ENCODE measurements at regions of chr6 and their contacts with region 1.

Region 1: DNA sequence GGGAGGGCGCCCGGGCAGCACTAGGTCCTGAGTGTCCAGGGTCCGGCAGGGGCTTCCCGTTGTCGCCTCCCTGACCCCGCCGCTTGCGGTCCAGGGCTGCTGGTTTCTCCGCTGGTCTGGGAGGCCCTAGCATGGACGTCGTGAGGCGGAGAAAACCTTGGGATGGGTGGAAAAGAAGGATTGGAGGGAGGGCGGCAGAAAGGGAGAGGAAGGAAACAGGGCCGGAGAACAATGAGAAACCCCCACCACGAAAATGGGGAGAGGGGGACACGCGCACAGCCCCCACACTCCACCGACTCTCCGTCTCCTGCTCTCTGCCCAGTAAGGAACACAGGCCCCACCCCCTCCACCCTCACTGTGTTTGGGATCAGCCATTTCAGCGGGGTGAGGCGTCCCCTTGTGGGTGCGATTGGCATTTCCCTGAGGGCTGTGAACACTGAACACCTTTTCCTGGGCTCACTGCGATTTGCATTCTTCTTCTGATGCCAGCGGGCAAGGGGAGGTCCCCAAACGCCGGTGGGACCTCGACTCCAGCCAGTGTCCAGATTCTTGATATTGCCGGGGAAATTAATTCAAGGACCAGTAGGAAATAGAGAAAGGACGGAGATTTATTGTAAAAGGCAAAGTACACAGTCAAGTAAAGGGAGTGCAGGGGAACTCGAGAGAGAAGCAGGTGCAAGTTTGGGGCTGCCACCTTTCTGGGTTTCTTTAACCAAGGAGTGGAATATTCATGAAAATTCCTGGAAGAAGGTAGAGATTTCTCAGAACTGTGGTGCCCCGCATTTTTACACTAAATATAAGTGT is 3.3 kb upstream of the RAET1G start:
- DNase-seq: peak; percentile 80
- H3K4me3 ChIP-seq: peak overlapping the region; percentile 19 to 47 (median 45)
- H3K27ac ChIP-seq: no peak overlapping the region
- H3K4me1 ChIP-seq: peaks cover 4% of the 10 kb centered on the region
- H3K27me3 ChIP-seq: peaks cover 20 to 21% of the 10 kb centered on the region in 2 experiments
- CTCF ChIP-seq: peak; percentile 72 to 91
- POLR2A ChIP-seq: no peak

Region 2: GRCh38 chr6:149565527-149566409 is 360.4 kb before region 1 on chr6 and contains the start of gene GINM1:
- CTCF ChIA-PET with region 1: no interaction called
- POLR2A ChIA-PET with region 1: no interaction called
- dilution Hi-C with region 1: no loop called
- intact Hi-C with region 1: loop called (anchors 5 kb)
- DNase-seq: peak; percentile 97
- H3K4me3 ChIP-seq: peak within 1 kb of the TSS; percentile 75 to 93 (median 85)
- H3K27ac ChIP-seq: peak within 1 kb of the TSS; percentile 82
- H3K4me1 ChIP-seq: peaks cover 16% of the 10 kb centered on the region
- H3K27me3 ChIP-seq: no peaks in the 10 kb centered on the region
- CTCF ChIP-seq: peak; percentile 52 to 71
- POLR2A ChIP-seq: no peak
- total RNA-seq, gene GINM1: 38.0 and 38.2 TPM in 2 replicates

Region 3: GRCh38 chr6:149723771-149724417 is 202.3 kb before region 1 on chr6:
- CTCF ChIA-PET with region 1: no interaction called
- POLR2A ChIA-PET with region 1: no interaction called
- dilution Hi-C with region 1: no loop called
- intact Hi-C with region 1: loop called (anchors 1 kb)
- DNase-seq: peak; percentile 76
- H3K4me3 ChIP-seq: no peak overlapping the region
- H3K27ac ChIP-seq: no peak overlapping the region
- H3K4me1 ChIP-seq: peaks cover under 1% of the 10 kb centered on the region
- H3K27me3 ChIP-seq: no peaks in the 10 kb centered on the region
- CTCF ChIP-seq: peak; percentile 77
- POLR2A ChIP-seq: no peak

Region 4: DNA sequence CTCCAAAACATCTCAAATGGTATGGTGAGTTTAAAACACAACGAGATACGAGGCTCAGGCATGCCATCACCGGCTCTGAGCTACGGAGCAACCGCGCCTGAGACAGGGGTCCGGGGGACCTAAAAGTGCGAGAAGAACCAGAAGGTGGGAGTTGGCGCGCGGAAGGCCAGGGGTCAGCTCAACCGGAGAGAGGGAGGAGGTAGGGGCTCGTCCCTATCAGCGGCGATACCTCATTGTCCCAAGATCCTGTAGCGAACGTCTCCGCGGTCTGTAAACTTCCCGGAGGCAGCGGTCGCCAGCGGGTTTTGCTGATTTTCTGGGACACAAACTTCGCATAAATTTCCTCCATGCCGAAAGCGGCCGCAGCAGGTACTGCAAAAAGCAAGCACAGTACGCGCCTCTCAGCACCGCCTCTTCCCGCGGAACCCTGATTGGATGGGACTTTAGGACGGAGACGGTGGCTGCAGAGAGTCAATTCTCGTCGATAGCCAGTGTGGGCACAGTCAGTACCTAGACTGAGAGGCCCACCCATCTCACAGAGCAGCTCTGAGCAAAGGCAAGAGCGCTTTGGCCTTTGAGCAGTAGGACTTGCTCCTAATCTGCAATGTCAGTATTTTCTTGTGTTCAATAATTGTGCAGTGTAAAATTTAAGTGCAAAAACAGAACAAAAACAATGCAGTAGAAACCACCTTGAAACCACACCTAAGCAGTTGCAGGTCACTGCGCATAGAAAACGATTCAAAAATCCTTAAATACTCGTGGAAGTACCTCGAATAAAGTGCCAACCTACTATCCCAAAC is 179.8 kb before region 1 on chr6 and contains the start of gene NUP43:
- CTCF ChIA-PET with region 1: interaction called, 3 read pairs
- POLR2A ChIA-PET with region 1: no interaction called
- dilution Hi-C with region 1: no loop called
- intact Hi-C with region 1: loop called (anchors 1 kb)
- DNase-seq: peak; percentile 92
- H3K4me3 ChIP-seq: peak within 1 kb of the TSS; percentile 83 to 97 (median 96)
- H3K27ac ChIP-seq: peak within 1 kb of the TSS; percentile 47
- H3K4me1 ChIP-seq: peaks cover 12% of the 10 kb centered on the region
- H3K27me3 ChIP-seq: no peaks in the 10 kb centered on the region
- CTCF ChIP-seq: peak; percentile 34 to 53
- POLR2A ChIP-seq: peak; percentile 82
- total RNA-seq, gene NUP43: 49.0 and 56.8 TPM in 2 replicates

Region 5: DNA sequence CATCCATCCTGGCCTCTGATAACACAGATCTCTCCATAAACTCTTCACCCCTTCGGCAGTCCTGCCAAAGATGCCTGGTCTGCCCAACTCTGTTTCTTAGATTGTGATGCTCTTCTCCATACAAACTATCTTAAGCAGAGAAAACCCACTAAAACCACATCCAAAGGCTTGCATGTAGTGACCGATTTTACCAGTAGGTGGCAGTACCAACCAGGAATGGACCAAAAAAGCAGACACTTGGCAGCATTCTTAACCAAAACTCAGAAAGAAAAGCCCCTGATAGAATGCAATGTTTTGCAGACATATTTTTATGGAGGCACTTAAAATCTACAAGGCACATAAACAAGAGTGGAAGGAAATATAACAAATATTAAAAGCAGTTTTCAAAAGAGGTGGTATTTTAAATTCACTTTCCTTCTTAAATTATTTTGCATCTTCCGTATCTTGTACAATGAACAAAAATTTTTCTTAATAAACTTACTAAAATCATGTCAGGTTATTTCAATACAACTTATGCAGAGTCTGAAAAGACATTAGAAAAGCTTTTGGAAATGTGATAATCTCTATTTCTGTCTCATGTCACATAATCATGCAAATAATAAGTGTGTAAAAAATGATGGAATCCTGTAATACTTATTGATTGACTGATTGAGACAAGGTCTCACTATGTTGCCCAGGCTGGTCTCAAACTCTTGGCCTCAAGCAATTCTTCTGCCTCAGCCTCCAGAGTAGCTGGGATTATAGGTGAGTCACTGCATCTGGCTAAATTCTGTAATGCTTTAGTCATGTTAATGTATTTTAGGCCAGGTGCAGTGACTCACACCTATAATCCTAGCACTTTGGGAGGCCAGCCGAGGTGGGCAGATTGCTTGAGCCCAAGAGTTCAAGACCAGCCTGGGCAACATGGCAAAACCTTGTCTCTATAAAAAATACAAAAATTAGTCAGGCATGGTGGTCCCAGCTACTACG is 91.4 kb before region 1 on chr6:
- CTCF ChIA-PET with region 1: interaction called, 30 read pairs
- POLR2A ChIA-PET with region 1: no interaction called
- dilution Hi-C with region 1: no loop called
- intact Hi-C with region 1: loop called (anchors 1 kb)
- DNase-seq: peak; percentile 80
- H3K4me3 ChIP-seq: no peak overlapping the region
- H3K27ac ChIP-seq: no peak overlapping the region
- H3K4me1 ChIP-seq: no peaks in the 10 kb centered on the region
- H3K27me3 ChIP-seq: no peaks in the 10 kb centered on the region
- CTCF ChIP-seq: peak; percentile 77
- POLR2A ChIP-seq: no peak

Region 6: GRCh38 chr6:149840345-149841075 is 85.7 kb before region 1 on chr6:
- CTCF ChIA-PET with region 1: interaction called, 30 read pairs
- POLR2A ChIA-PET with region 1: no interaction called
- dilution Hi-C with region 1: no loop called
- intact Hi-C with region 1: loop called (anchors 1 kb)
- DNase-seq: peak; percentile 66
- H3K4me3 ChIP-seq: no peak overlapping the region
- H3K27ac ChIP-seq: no peak overlapping the region
- H3K4me1 ChIP-seq: peaks cover 3% of the 10 kb centered on the region
- H3K27me3 ChIP-seq: no peaks in the 10 kb centered on the region
- CTCF ChIP-seq: peak; percentile 64 to 65
- POLR2A ChIP-seq: no peak

Region 7: GRCh38 chr6:150195996-150196417 is 269.8 kb after region 1 on chr6:
- CTCF ChIA-PET with region 1: no interaction called
- POLR2A ChIA-PET with region 1: no interaction called
- dilution Hi-C with region 1: no loop called
- intact Hi-C with region 1: no loop called
- DNase-seq: no peak
- H3K4me3 ChIP-seq: no peak overlapping the region
- H3K27ac ChIP-seq: no peak overlapping the region
- H3K4me1 ChIP-seq: no peaks in the 10 kb centered on the region
- H3K27me3 ChIP-seq: peaks cover 0 to 1% of the 10 kb centered on the region in 2 experiments
- CTCF ChIP-seq: no peak
- POLR2A ChIP-seq: no peak

Measured in endothelial cell of umbilical vein (primary cell).